Activated CD8-positive, alpha-beta T cell treated with anti-CD3 and anti-CD28 coated beads, Interleukin-2, amount 10 ng/mL, durations not matched to agents 7 days and 5 days (primary cell): ENCODE measurements at regions of chr17 and their contacts with region 1.

Region 1: DNA sequence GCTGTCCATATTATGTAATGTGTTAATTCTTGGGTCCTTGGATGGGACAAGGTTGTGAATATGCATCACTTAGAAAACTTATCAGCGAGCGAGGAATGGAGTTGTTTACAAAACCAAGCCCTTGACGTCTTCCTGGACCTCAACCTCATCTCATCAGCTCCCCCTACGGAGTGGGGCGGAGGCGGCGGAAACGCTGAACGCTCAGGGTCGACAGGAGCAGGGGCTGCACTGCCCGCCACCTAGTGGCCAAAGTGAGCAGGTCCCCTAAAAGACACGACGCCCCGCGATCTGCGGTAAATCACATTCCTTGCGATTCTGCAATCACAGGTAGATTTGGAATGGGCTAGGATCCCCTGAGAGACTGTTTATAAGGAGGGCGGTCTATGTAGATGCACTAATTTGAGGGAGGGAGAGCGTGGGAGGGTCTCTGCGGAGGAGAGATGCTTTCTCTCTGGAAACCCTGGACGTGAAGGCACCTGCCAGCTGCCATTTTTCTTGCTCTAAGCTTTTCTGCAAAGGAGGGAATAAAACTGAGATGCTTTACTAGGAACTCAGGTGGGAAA is 5.4 kb upstream of the ICAM2 start:
- DNase-seq: peak; percentile 96
- ATAC-seq: peak; percentile 89
- H3K4me3 Mint-ChIP-seq: peak overlapping the region; percentile 63
- H3K27ac Mint-ChIP-seq: peak overlapping the region; percentile 86
- H3K4me1 Mint-ChIP-seq: peaks cover 69% of the 10 kb centered on the region
- H3K27me3 Mint-ChIP-seq: no peaks in the 10 kb centered on the region

Region 2: GRCh38 chr17:63904316-63904715 is 121.5 kb before region 1 on chr17:
- CTCF ChIA-PET with region 1: interaction called, 21 read pairs
- POLR2A ChIA-PET with region 1: no interaction called
- DNase-seq: no peak
- ATAC-seq: no peak
- H3K4me3 Mint-ChIP-seq: no peak overlapping the region
- H3K27ac Mint-ChIP-seq: no peak overlapping the region
- H3K4me1 Mint-ChIP-seq: peaks cover 6% of the 10 kb centered on the region
- H3K27me3 Mint-ChIP-seq: peaks cover 35% of the 10 kb centered on the region

Region 3: GRCh38 chr17:63931099-63931561 is 94.7 kb before region 1 on chr17:
- CTCF ChIA-PET with region 1: interaction called, 30 read pairs
- POLR2A ChIA-PET with region 1: interaction called, 3 read pairs
- DNase-seq: peak; percentile 75
- ATAC-seq: peak; percentile 80
- H3K4me3 Mint-ChIP-seq: peak overlapping the region; percentile 93
- H3K27ac Mint-ChIP-seq: peak overlapping the region; percentile 82
- H3K4me1 Mint-ChIP-seq: peaks cover 29% of the 10 kb centered on the region
- H3K27me3 Mint-ChIP-seq: peaks cover 10% of the 10 kb centered on the region

Region 4: DNA sequence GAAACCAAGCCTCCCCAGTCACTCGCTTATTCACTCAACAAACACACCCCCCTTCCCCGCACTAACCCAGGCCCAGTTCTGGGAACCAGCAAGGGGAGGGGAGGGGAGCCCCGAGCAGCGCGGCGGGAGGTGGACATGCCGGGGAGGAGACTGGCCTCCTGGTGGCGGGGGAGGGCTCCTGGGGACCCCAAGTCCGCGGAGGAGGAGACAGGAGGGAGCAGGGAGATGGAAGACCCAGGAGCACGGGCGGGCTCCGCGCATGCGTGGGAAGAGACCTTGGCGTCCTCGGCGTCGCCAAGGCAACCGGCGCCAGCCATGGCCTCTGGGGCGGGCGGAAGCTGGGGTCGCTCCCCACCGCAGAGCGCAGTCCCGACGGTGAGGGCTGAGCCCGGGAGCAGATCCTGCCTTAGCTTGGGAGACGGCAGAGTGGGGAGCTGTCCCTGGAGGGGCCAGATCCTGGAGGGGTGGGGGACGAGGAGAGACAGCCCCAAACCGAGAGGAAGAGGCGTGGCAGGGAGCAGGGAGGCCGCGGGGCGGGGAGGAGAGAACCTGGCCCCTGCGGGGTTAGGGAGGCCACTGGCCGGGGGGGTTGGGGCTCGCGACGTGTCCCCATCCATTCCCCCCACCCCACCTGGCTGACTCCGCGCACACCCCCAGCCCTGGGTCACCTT is 27.6 kb before region 1 on chr17 and contains the start of gene PRR29:
- CTCF ChIA-PET with region 1: interaction called, 44 read pairs
- POLR2A ChIA-PET with region 1: interaction called, 4 read pairs
- DNase-seq: peak; percentile 79
- ATAC-seq: peak; percentile 83
- H3K4me3 Mint-ChIP-seq: peak within 1 kb of the TSS; percentile 84
- H3K27ac Mint-ChIP-seq: peak within 1 kb of the TSS; percentile 82
- H3K4me1 Mint-ChIP-seq: peaks cover 51% of the 10 kb centered on the region
- H3K27me3 Mint-ChIP-seq: peaks cover 18% of the 10 kb centered on the region
- total RNA-seq, gene PRR29: 0.97 to 1.3 TPM

Region 5: GRCh38 chr17:64056269-64057005 is 30.6 kb after region 1 on chr17:
- CTCF ChIA-PET with region 1: interaction called, 37 read pairs
- POLR2A ChIA-PET with region 1: interaction called, 4 read pairs
- DNase-seq: no peak
- ATAC-seq: no peak
- H3K4me3 Mint-ChIP-seq: no peak overlapping the region
- H3K27ac Mint-ChIP-seq: peak overlapping the region; percentile 77
- H3K4me1 Mint-ChIP-seq: peaks cover 46% of the 10 kb centered on the region
- H3K27me3 Mint-ChIP-seq: no peaks in the 10 kb centered on the region

Region 6: GRCh38 chr17:64081802-64082799 is 56.3 kb after region 1 on chr17:
- CTCF ChIA-PET with region 1: interaction called, 20 read pairs
- POLR2A ChIA-PET with region 1: interaction called, 8 read pairs
- DNase-seq: peak; percentile 68
- ATAC-seq: peak; percentile 89
- H3K4me3 Mint-ChIP-seq: peak overlapping the region; percentile 51
- H3K27ac Mint-ChIP-seq: peak overlapping the region; percentile 87
- H3K4me1 Mint-ChIP-seq: peaks cover 16% of the 10 kb centered on the region
- H3K27me3 Mint-ChIP-seq: no peaks in the 10 kb centered on the region

Region 7: GRCh38 chr17:64281962-64282727 is 256.3 kb after region 1 on chr17:
- CTCF ChIA-PET with region 1: interaction called, 15 read pairs
- POLR2A ChIA-PET with region 1: no interaction called
- DNase-seq: peak; percentile 69
- ATAC-seq: peak; percentile 55
- H3K4me3 Mint-ChIP-seq: no peak overlapping the region
- H3K27ac Mint-ChIP-seq: no peak overlapping the region
- H3K4me1 Mint-ChIP-seq: peaks cover 6% of the 10 kb centered on the region
- H3K27me3 Mint-ChIP-seq: no peaks in the 10 kb centered on the region